ENCODE measurements at regions of chr13 and their contacts with region 1.

Region 1: GRCh38 chr13:112532837-112533745 is 54.9 kb downstream of the TUBGCP3 start:
- DNase-seq: peak; percentile 18
- H3K4me3 Mint-ChIP-seq: no peak overlapping the region
- H3K27ac Mint-ChIP-seq: no peak overlapping the region
- H3K4me1 Mint-ChIP-seq: peaks cover 4% of the 10 kb centered on the region
- H3K27me3 Mint-ChIP-seq: no peaks in the 10 kb centered on the region

Region 2: DNA sequence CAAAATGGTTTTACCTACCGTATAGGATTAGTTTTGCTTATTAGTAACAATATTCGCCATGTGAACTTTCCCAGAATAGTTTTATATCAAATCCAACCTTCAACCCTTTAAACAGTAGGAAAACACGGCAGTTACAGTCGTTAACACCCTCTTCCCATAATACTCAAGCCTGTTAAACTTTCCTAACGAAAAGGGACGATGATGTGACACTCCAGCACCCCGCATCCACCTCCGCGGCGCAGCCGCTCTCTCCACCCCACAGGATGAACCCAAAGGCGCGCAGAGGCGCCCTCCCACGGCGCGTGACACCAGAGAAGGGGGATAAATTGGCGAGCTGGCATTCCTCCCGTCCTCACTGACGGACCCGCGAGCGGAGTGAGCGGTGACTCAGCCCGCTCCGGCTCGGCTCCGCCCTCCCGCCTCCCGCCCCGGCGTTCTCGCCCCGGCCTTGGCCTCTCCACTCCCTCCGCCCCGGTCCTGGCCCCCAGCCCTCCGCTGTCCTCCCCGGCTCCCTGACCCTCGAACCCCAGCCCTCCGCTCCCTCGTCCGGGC is 54.2 kb after region 1 on chr13:
- CTCF ChIA-PET with region 1: no interaction called
- intact Hi-C with region 1: loop called (anchors 5 kb)
- DNase-seq: peak; percentile 78
- H3K4me3 Mint-ChIP-seq: peak overlapping the region; percentile 96
- H3K27ac Mint-ChIP-seq: peak overlapping the region; percentile 93
- H3K4me1 Mint-ChIP-seq: peaks cover 47% of the 10 kb centered on the region
- H3K27me3 Mint-ChIP-seq: no peaks in the 10 kb centered on the region